ENCODE measurements at regions of chr19 and their contacts with region 1.

Region 1: DNA sequence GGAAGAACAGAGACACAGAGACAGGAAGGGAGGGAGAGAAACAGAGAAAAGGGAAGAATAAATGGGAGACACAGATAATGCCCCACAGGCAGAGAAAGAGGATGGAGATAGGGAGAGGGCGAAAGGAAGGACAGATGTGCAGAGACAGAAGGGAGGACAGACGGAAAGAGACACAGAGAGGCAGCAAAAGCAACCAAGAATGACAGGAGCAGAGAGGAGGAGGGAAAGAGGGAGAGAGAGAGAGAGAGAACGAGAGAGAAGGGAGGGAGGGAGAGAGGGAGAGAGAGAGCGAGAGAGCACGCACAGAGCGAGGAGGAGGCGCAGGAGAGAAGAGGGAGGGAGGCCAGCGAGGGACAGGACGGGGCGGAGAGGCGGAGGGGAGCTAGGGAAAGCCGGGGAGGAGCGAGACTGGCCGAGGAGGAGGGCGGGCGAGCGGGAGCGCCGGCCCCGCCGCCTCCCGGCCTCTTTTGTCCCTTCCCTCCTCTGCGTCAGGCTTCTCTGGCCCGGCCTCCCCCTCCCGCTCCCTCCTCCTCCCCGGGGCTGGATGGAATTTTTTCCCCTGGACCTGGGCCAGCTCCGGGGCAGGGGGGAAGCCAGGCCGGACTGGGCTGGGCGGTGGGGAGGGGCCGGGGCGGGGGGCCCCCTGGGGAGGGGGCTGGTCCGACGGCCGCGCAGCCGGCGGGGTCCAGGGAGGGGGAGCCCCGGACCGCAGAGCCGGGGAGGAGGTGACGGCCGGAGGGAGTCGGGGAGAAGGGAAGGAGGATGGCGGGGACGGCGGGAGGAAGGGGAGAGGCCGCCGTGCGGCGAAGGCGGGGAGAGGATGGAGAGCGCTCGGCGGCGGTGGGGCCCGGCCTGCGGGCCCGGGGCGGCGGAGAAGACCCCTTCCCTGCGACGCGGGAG is 4.2 kb upstream of the SPACA6 start:
- DNase-seq: peak; percentile 91
- ATAC-seq: peak; percentile 90

Region 2: GRCh38 chr19:51448011-51448744 is 240.7 kb before region 1 on chr19:
- intact Hi-C with region 1: no loop called
- DNase-seq: no peak
- ATAC-seq: no peak

Region 3: DNA sequence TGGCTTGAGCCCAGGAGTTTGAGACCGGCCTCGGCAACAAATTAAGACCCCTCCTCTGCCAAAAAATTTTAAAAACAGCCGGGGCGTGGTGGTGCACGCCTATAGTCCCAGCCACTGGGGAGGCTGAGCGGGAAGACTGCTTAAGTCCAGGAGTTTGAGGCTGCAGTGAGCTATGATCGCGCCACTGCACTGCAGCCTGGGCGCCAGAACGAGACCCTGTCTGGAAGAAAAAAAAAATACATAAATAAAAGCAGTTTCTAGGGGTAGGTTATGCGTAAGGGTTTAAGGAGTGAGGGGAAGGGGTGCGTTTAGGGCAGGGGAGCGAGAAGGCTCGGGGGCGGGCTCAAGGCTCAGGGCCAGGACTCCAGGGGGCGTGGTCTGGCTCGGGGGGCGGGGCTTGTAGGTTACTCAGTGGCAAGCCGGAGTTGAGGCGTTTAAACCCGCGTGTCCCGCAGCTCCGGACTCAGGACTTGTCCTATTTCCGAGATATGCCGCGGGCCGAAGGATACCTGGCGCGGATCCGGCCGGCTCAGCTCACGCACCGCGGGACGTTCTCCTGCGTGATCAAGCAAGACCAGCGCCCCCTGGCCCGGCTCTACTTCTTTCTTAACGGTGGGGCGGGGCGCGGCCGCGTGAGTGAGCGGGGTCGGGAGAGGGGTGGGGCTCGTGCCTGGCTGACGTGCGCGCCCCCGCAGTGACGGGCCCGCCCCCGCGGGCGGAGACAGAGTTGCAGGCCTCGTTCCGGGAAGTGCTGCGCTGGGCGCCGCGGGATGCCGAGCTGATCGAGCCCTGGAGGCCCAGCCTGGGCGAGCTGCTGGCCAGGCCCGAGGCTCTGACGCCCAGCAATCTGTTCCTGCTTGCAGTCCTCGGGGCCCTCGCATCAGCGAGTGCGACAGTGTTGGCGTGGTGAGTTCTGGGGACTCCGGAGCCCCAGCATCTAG is 14.9 kb after region 1 on chr19:
- intact Hi-C with region 1: loop called (anchors 2 kb)
- DNase-seq: peak; percentile 99
- ATAC-seq: peak; percentile 95

Region 4: DNA sequence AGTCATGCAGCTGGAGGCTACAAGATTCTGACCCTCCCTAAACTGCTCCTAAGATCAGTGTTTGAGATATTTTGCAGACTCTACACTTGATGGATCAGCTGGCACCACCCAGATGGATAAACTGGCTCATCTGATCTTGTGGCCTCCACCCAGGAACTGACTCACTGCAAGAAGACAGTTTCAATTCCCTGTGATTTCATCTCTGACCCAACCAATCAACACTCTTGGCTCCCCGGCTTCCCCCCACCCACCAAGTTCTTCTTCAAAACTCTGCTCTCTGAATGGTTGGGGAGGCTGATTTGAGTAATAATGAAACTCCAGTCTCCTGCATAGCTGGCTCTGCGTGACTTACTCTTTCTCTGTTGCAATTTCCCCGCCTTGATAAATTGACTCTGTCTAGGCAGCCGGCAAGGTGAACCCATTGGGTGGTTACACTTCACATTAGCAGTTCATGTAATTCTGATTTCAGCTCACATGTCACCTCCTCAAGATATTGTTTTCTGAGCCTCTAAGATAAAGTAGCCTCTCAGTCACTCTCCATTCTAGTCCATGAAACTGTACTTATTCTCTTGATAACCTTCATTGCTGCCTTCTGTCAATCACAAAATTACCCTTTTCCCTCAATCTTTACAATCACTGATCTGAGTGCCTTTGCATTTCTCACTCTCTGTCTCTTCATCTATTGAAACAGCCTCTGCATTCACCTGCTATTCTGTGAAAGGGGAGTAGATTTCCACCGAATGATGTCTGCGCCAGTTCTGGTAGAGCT is 96.2 kb after region 1 on chr19:
- intact Hi-C with region 1: no loop called
- DNase-seq: peak; percentile 76
- ATAC-seq: peak; percentile 80

Region 5: DNA sequence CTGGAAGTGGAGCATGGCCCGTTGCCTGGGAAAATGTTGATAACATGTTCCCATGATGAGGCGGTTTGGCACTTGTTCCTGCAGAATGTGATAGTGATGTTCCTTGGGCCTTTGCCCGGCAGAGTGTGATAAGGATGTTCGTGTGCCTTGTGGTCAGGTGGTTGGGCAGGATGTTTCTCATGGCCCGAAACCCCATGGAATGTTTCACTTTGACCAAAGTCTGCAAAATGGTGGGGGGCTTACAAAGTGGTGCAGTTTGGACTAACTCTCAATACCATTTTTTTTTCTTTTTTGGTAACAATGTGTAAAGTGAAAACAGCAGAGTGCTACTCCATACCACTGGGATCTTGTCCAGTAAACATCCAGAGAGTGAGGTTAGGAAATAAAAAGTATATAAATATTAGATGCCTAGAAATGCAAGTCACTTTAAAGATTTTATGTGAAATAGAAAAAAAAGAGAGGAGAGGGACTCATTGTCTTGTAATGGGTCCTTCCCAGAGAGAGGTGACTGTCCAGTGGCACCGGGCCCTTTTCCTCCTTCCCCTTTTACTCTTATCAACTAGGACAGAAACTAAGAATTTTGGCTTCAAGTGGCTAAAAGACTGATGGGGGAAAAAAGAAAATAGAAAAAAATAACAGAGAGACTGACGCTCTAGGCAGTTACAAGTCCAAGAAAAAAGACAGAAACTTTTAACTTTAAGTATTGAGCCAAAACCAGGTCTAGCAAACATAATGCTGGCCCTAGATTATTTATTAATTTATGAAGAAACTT is 111.7 kb after region 1 on chr19:
- intact Hi-C with region 1: loop called (anchors 2 kb)
- DNase-seq: peak; percentile 88
- ATAC-seq: peak; percentile 78

Region 6: DNA sequence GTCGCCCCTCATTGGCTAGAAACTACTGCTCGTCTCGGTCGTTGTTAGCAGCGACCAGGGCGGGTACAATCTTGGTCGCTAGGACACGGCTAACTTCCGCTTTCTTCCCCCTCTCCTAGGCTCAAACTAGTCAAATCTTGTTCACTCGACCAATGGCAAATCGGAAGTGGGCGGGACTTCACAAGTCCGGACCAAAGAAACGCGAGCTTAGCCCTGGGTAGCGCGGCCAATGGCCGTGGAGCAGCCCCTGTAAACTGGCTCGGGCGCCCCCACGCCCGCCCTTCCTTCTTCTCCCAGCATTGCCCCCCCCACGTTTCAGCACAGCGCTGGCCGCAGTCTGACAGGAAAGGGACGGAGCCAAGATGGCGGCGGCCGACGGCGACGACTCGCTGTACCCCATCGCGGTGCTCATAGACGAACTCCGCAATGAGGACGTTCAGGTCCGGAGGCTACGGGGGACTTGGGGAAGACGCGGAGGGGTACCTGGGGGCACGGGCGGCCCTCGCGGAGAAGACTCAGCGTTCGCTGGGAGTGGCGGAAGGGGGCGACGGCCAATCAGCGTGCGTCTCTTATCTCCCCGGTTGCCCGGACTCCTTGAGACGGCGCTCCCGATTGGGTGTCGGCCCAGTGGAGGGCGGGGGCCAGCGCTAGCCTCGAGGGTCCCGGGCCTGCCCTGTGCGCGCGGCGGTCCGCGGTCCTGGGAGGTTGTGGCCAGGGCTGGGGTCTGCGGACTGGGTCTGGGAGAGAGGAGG is 501.0 kb after region 1 on chr19 and contains the start of gene PPP2R1A:
- intact Hi-C with region 1: loop called (anchors 2 kb)
- DNase-seq: peak; percentile 99
- ATAC-seq: peak; percentile 96
- total RNA-seq, gene PPP2R1A: 338 TPM